Mammary epithelial cell (primary cell): ENCODE measurements at regions of chr17 and their contacts with region 1.

Region 1: DNA sequence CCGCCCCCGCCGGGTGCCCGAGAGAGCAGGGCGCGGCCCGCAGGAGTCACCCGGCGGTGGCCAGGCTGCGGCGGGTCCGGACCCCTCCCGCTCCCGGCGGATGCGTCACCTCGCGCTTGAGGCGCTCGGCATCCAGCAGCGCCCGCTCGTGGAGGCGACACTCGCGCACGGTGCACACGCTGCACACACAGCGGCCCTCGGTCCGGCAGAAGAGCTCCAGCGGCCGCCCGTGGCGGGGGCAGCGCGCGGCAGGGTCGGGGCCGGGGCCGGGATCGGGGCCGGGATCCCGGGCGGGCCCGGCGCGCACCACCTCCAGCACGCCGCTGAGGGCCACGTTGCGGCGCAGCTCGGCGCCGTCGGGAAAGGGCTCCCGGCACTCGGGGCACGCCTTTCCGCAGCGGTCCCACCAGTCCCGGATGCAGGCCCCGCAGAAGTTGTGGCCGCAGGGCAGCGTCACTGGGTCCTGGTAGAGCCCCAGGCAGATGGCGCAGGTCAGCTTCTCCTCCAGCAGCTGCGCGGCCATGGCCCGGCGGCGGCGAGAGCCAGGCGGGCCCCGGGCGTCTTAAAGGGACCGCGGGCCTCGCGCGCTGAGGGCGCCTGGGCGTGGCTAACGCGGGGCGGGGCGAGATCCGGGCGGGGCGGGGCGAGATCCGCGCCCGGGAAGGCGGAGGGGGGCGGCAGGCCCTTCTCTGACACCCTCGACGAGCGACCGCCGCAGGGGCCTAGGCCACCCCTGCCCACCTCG is at the start of gene TRIM65:
- DNase-seq: peak; percentile 75
- H3K4me3 ChIP-seq: peak within 1 kb of the TSS; percentile 51 to 84 (median 77)
- H3K27ac ChIP-seq: peak within 1 kb of the TSS; percentile 40
- H3K4me1 ChIP-seq: peaks cover 8% of the 10 kb centered on the region
- H3K27me3 ChIP-seq: no peaks in the 10 kb centered on the region
- CTCF ChIP-seq: peak; percentile 9 to 53
- total RNA-seq, gene TRIM65: 19.3 to 20.2 TPM

Region 2: DNA sequence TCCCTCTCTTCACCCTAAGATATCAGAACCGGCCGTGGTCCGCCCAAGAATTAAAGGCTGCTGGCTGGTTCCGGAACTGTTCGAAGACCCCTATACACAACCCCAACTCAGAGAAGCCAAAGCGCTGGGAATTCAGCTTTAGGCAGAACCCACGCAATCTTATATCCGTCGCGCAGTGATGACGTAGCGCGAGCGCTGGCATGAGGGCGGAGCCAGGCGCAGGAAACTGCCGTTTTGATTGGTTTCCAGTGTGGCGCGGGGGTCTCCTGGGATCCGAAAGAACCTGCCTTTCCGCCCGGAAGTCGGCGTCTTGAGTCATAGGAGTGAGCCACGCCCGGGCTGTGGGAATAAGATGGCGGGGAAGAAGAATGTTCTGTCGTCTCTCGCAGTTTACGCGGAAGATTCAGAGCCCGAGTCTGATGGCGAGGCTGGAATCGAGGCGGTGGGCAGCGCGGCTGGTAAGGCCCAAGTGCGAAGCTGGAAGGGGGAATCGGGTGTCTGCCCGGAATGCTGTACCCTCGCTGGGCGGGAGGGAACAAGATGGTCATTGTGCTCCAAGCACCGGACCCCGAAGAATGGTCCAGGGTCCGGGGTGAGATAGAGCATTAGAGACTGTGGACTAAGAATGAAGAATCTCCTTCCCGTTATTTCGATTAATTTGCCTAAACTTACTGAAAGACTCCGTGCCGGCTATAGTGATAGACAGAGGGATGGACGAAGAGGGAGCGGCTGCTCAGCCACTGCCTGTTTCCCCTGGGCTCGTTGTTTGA is 229.4 kb before region 1 on chr17 and contains the starts of genes RECQL5 and SAP30BP:
- CTCF ChIA-PET with region 1: no interaction called
- dilution Hi-C with region 1: no loop called
- in situ Hi-C with region 1: loop called in 1 of 2 experiments (anchors 25 kb)
- intact Hi-C with region 1: no loop called
- DNase-seq: peak; percentile 96
- H3K4me3 ChIP-seq: peak within 1 kb of the TSS; percentile 89 to 99 (median 94)
- H3K27ac ChIP-seq: peak within 1 kb of the TSS; percentile 97
- H3K4me1 ChIP-seq: peaks cover 28% of the 10 kb centered on the region
- H3K27me3 ChIP-seq: no peaks in the 10 kb centered on the region
- CTCF ChIP-seq: no peak
- total RNA-seq, gene RECQL5: 25.3 to 34.8 TPM
- total RNA-seq, gene SAP30BP: 49.0 to 105 TPM

Region 3: DNA sequence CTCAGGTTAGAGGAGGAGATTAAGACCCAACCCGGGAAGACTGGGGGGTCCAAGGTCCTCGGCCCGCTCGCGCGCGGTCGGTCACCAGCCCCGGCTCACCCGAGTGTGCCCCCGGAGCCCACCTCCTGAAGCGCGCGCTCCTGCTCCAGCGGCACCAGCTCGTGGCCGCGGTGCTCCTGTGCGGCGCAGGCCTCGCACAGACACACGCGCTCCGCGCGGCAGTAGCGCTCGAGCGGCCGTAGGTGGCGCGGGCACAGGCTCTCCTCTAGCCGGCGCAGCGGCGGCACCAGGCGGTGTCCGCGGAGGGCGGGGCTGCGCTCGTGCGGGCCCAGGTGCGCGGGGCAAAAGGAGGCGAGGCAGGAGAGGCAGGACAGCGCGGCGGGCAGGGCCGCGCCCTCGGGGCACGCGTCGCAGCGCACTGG is 18.8 kb before region 1 on chr17:
- CTCF ChIA-PET with region 1: no interaction called
- dilution Hi-C with region 1: no loop called
- in situ Hi-C with region 1: no loop called
- intact Hi-C with region 1: loop called (anchors 1 kb)
- DNase-seq: peak; percentile 76
- H3K4me3 ChIP-seq: peak overlapping the region; percentile 64 to 67 (median 65)
- H3K27ac ChIP-seq: peak overlapping the region; percentile 76
- H3K4me1 ChIP-seq: peaks cover 34% of the 10 kb centered on the region
- H3K27me3 ChIP-seq: no peaks in the 10 kb centered on the region
- CTCF ChIP-seq: peak; percentile 30 to 64